MCF 10A (cell line): ENCODE measurements at regions of chr4 and their contacts with region 1.

Region 1: DNA sequence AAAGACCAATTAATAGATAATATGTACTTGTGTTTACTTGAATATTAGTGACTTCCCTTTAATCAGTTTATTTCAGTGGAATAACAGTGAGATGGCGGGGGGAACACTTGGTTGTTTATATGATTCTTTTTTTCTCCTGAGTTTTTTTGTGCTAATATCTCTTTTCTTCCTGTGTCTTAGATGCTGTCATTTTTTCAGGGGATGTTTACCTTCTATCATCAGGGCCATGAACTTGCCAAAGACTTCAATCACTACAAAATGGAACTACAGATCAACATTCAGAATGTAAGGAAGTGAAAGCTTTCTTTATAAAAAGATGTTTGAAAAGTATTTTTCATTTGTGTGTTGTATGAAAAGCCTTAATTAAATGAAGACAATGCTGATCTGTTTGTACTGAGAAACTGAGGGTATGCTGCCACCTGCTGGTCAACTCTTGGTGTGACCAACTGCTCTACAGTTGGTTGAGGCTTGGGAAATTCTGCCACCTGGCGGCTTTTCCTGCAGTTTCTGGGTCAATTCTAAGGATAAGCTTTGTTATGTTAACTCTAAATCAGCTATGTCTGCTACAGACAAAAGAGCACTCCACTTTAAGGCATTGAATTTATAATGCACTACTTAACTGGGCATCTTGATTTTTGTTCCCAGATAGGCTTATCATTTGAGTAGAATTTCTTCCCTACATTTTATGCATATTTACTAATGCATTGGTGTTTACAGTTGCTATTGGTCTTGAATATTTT is 134.8 kb downstream of the ARHGAP10 start:
- DNase-seq: peak; percentile 93
- H3K4me3 Mint-ChIP-seq: no peak overlapping the region
- H3K27ac Mint-ChIP-seq: peak overlapping the region; percentile 75
- H3K4me1 Mint-ChIP-seq: no peaks in the 10 kb centered on the region
- H3K27me3 Mint-ChIP-seq: no peaks in the 10 kb centered on the region
- CTCF ChIP-seq: peak; percentile 98

Region 2: DNA sequence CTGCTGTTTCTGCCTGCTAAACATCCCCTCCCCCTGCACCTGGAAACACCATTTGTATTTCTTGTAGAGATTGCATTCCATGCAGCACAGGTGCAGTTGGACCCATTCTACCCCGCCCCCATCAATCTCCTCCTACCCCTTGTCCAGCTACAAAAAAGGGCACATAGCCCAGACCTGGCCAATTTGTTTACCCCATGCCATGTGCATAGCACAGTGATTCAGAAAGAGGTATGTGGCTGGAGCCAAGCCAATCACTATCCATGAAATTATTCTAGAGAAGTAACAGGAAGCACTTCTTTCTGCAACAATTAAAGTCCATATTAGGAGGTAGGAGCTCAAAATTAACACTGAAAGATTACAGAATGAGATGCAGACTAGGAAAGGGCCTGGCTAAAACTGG is 269.7 kb before region 1 on chr4:
- CTCF ChIA-PET with region 1: interaction called, 25 read pairs
- POLR2A ChIA-PET with region 1: interaction called, 4 read pairs
- intact Hi-C with region 1: loop called (anchors 1 kb)
- DNase-seq: peak; percentile 94
- H3K4me3 Mint-ChIP-seq: no peak overlapping the region
- H3K27ac Mint-ChIP-seq: peak overlapping the region; percentile 97
- H3K4me1 Mint-ChIP-seq: peaks cover 35% of the 10 kb centered on the region
- H3K27me3 Mint-ChIP-seq: no peaks in the 10 kb centered on the region
- CTCF ChIP-seq: no peak

Region 3: DNA sequence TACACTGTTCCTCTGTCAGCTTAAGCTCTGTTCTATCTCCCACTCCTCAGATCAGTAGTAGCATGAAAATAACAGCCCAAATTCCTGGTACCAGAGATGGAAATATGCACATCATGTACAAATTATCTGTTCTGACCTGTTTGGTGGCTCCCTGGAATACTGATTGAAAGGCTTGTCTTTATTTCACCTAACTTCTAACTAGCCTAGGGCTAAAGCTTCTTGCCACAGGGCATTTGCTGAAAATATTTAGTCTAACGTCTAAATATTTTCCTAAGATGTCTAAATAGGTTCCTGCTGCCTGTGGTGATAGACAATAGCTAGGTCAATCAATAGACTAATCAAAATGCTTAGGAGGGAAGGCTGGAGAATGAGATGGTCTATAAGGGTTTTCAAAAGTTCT is 169.8 kb before region 1 on chr4:
- CTCF ChIA-PET with region 1: interaction called, 66 read pairs
- POLR2A ChIA-PET with region 1: no interaction called
- intact Hi-C with region 1: no loop called
- DNase-seq: no peak
- H3K4me3 Mint-ChIP-seq: no peak overlapping the region
- H3K27ac Mint-ChIP-seq: no peak overlapping the region
- H3K4me1 Mint-ChIP-seq: no peaks in the 10 kb centered on the region
- H3K27me3 Mint-ChIP-seq: no peaks in the 10 kb centered on the region
- CTCF ChIP-seq: no peak

Region 4: GRCh38 chr4:147741190-147741785 is 125.4 kb before region 1 on chr4:
- CTCF ChIA-PET with region 1: interaction called, 17 read pairs
- POLR2A ChIA-PET with region 1: no interaction called
- intact Hi-C with region 1: no loop called
- DNase-seq: no peak
- H3K4me3 Mint-ChIP-seq: no peak overlapping the region
- H3K27ac Mint-ChIP-seq: no peak overlapping the region
- H3K4me1 Mint-ChIP-seq: peaks cover 18% of the 10 kb centered on the region
- H3K27me3 Mint-ChIP-seq: no peaks in the 10 kb centered on the region
- CTCF ChIP-seq: no peak

Region 5: DNA sequence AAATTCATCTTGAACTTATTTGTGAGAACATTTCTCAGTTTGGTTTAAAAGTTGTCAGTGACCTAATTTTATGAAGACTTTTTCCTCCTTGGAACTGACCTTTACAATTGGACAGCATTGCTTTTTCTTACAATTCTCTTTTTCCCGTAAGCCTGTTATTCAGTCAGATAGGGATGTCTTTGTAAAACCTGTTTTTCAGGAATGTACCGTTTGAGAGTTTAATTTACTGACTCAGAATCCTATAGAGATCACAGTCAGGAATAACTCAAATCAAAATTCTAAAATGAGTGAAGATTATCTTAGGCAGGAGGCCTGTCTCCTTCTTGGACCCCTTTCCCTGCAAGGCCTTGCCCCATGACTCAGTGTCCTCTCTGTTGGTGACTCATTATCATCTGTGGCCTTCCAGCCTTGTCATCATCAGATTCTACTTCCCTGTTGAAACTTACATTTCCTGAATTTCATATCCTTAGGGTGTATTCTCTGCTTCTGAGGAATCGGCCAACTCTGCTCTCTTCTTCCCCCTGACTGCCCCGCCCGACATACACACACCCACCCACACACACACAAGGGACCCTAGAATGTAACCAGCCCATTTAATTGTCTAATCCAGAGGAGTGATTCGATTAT is 35.0 kb before region 1 on chr4:
- CTCF ChIA-PET with region 1: interaction called, 26 read pairs
- POLR2A ChIA-PET with region 1: interaction called, 4 read pairs
- intact Hi-C with region 1: no loop called
- DNase-seq: peak; percentile 91
- H3K4me3 Mint-ChIP-seq: peak overlapping the region; percentile 36
- H3K27ac Mint-ChIP-seq: peak overlapping the region; percentile 92
- H3K4me1 Mint-ChIP-seq: peaks cover 38% of the 10 kb centered on the region
- H3K27me3 Mint-ChIP-seq: no peaks in the 10 kb centered on the region
- CTCF ChIP-seq: no peak

Region 6: DNA sequence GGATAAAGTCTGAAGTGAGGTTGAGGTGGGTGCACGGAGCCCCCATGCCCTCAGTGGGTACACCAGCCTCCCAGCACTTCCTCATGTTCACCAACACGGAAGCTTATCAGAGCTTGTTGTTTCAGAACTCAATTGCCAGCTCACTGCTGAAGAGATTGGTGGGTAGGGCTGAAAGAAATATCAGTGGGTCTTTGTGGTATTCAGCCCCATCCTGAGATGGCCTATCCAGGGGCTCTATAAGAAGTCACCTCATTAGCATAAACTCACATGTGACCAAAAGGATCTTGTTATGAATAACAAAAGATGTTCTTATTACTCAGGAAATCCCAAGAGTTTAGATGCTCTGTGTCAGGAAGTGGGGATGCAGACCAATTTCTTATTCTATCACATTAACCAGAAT is 42.5 kb after region 1 on chr4:
- CTCF ChIA-PET with region 1: interaction called, 14 read pairs
- POLR2A ChIA-PET with region 1: no interaction called
- intact Hi-C with region 1: no loop called
- DNase-seq: no peak
- H3K4me3 Mint-ChIP-seq: no peak overlapping the region
- H3K27ac Mint-ChIP-seq: no peak overlapping the region
- H3K4me1 Mint-ChIP-seq: no peaks in the 10 kb centered on the region
- H3K27me3 Mint-ChIP-seq: no peaks in the 10 kb centered on the region
- CTCF ChIP-seq: no peak